Dendritic cell treated with granulocyte-macrophage colony-stimulating factor and Interleukin-4, amounts not matched to agents 40 ng/mL and 50 ng/mL, for 4 days (primary cell): ENCODE measurements at regions of chr22 and their contacts with region 1.

Region 1: DNA sequence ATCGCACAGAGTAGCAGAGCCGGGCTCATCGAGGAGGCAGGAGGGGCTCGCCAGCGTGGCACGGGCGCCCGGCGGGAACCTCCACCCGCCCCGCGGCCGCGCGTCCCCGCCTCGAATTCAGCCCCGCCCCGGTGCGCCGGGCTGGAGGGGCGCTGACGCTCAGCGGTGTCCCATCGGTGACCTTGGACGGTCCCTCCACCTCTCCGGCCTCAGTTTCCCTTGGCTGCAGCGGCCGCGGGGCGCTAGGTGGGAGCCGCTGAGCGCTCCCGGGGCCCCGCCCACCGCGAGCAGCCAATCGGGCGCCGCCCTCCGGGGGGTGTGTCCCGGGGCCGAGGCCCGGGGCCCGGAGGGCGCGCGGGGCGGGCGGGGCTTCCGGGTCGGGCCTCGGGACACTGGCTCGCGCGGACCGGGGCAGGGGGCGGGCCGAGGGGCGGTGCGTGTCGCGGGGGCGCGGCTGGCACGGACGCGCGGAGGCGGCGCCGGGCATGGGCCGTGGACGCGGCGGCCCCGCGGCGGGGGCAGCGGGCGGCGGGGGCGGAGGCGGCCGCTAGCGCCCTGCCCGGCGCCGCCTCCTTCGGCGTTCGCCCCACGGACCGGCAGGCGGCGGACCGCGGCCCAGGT is at the start of gene PPARA:
- H3K4me3 Mint-ChIP-seq: peak within 1 kb of the TSS; percentile 88
- H3K27ac Mint-ChIP-seq: peak within 1 kb of the TSS; percentile 79
- H3K4me1 Mint-ChIP-seq: peaks cover 22% of the 10 kb centered on the region
- H3K27me3 Mint-ChIP-seq: peaks cover 39% of the 10 kb centered on the region

Region 2: DNA sequence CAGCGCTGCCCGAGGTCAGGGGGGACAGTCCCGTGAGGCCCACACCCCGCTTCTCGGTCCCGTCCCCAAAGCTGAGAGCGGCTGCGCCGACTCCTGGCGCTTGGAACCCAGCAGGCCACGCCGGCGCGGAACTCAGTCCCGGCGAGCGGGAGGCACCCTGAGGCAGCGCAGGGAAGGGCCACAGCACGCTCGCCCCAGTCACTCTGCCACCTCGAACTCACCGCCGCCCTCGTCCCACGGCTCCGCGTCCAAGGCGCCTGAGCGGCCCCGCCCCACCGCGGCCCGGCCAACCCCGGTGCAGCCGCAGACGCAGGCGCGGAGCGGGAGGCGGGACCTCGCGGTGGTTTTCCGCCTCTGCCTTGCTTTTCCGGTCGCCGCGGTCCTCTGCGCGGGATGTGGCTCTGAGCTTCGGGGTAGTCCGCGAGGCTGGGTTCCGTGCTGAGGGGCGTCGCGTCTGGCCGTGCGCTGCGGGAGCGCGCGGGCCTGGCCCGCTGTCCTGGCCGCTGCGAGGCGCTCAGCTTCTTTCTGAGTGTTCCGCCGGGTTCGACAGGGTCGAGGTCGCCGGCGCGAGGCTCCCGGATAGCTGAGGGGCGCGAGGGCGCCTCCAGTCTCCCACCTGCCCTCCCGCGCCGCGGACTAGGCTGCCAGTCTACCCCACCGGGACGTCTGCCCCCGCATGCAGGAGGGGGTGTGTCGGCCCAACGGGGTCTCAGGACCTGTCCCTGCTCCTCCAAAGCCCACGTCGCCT is 100.1 kb after region 1 on chr22 and contains the start of gene CDPF1:
- intact Hi-C with region 1: loop called (anchors 10 kb)
- H3K4me3 Mint-ChIP-seq: peak within 1 kb of the TSS; percentile 90
- H3K27ac Mint-ChIP-seq: peak within 1 kb of the TSS; percentile 91
- H3K4me1 Mint-ChIP-seq: peaks cover 28% of the 10 kb centered on the region
- H3K27me3 Mint-ChIP-seq: no peaks in the 10 kb centered on the region

Region 3: GRCh38 chr22:46267431-46268279 is 117.5 kb after region 1 on chr22 and contains the start of gene TTC38:
- intact Hi-C with region 1: loop called (anchors 2 kb)
- H3K4me3 Mint-ChIP-seq: peak within 1 kb of the TSS; percentile 85
- H3K27ac Mint-ChIP-seq: peak within 1 kb of the TSS; percentile 77
- H3K4me1 Mint-ChIP-seq: peaks cover 35% of the 10 kb centered on the region
- H3K27me3 Mint-ChIP-seq: peaks cover 27% of the 10 kb centered on the region